Right cardiac atrium (tissue), 5 donors: ENCODE measurements at regions of chr14 and their contacts with region 1.

Region 1: GRCh38 chr14:68084256-68084655 is 264.7 kb downstream of the RAD51B start:
- DNase-seq: no peak
- ATAC-seq: no peak
- H3K4me3 ChIP-seq: no peak overlapping the region
- H3K27ac ChIP-seq: no peak overlapping the region
- H3K4me1 ChIP-seq: no peaks in the 10 kb centered on the region
- H3K27me3 ChIP-seq: no peaks in the 10 kb centered on the region

Region 2: GRCh38 chr14:67951529-67952135 is 132.6 kb before region 1 on chr14:
- intact Hi-C with region 1: no loop called
- DNase-seq: no peak
- ATAC-seq: no peak
- H3K4me3 ChIP-seq: no peak overlapping the region
- H3K27ac ChIP-seq: no peak overlapping the region
- H3K4me1 ChIP-seq: no peaks in the 10 kb centered on the region
- H3K27me3 ChIP-seq: no peaks in the 10 kb centered on the region

Region 3: GRCh38 chr14:68232300-68233055 is 148.2 kb after region 1 on chr14:
- intact Hi-C with region 1: loop called in 1 of 4 experiments (anchors 10 kb)
- DNase-seq: peak in 1 of 3 donors; percentile 32
- ATAC-seq: peak; percentile 95 to 97
- H3K4me3 ChIP-seq: no peak overlapping the region
- H3K27ac ChIP-seq: peak overlapping the region; percentile 88
- H3K4me1 ChIP-seq: no peaks in the 10 kb centered on the region
- H3K27me3 ChIP-seq: no peaks in the 10 kb centered on the region

Region 4: GRCh38 chr14:68426661-68427549 is 342.6 kb after region 1 on chr14:
- intact Hi-C with region 1: no loop called
- DNase-seq: no peak
- ATAC-seq: peak in 1 of 2 donors; percentile 22
- H3K4me3 ChIP-seq: no peak overlapping the region
- H3K27ac ChIP-seq: no peak overlapping the region
- H3K4me1 ChIP-seq: no peaks in the 10 kb centered on the region
- H3K27me3 ChIP-seq: no peaks in the 10 kb centered on the region